Activated T-helper 2 cell treated with anti-CD3 and anti-CD28 coated beads, Interferon-gamma antibody, Interleukin-2, Interleukin-4, amounts not matched to agents 10 μg/mL and 5 μg/mL and 100 μg/mL, durations not matched to agents 14 hours and 24 hours and 36 hours (primary cell): ENCODE measurements at regions of chr15 and their contacts with region 1.

Region 1: GRCh38 chr15:83066734-83067637 is at the start of gene BTBD1:
- DNase-seq: peak; percentile 80
- H3K4me3 Mint-ChIP-seq: peak within 1 kb of the TSS; percentile 81
- H3K27ac Mint-ChIP-seq: peak within 1 kb of the TSS; percentile 72
- H3K4me1 Mint-ChIP-seq: peaks cover 20% of the 10 kb centered on the region
- H3K27me3 Mint-ChIP-seq: no peaks in the 10 kb centered on the region
- total RNA-seq, gene BTBD1: 56.8 and 59.5 TPM in 2 replicates

Region 2: GRCh38 chr15:82832601-82833361 is 234.2 kb before region 1 on chr15:
- intact Hi-C with region 1: loop called (anchors 10 kb)
- DNase-seq: peak; percentile 30
- H3K4me3 Mint-ChIP-seq: peak overlapping the region; percentile 49
- H3K27ac Mint-ChIP-seq: peak overlapping the region; percentile 91
- H3K4me1 Mint-ChIP-seq: peaks cover 46% of the 10 kb centered on the region
- H3K27me3 Mint-ChIP-seq: no peaks in the 10 kb centered on the region

Region 3: GRCh38 chr15:83092309-83092976 is 25.5 kb after region 1 on chr15:
- intact Hi-C with region 1: no loop called
- DNase-seq: no peak
- H3K4me3 Mint-ChIP-seq: no peak overlapping the region
- H3K27ac Mint-ChIP-seq: peak overlapping the region; percentile 24
- H3K4me1 Mint-ChIP-seq: peaks cover 6% of the 10 kb centered on the region
- H3K27me3 Mint-ChIP-seq: peaks cover 22% of the 10 kb centered on the region

Region 4: DNA sequence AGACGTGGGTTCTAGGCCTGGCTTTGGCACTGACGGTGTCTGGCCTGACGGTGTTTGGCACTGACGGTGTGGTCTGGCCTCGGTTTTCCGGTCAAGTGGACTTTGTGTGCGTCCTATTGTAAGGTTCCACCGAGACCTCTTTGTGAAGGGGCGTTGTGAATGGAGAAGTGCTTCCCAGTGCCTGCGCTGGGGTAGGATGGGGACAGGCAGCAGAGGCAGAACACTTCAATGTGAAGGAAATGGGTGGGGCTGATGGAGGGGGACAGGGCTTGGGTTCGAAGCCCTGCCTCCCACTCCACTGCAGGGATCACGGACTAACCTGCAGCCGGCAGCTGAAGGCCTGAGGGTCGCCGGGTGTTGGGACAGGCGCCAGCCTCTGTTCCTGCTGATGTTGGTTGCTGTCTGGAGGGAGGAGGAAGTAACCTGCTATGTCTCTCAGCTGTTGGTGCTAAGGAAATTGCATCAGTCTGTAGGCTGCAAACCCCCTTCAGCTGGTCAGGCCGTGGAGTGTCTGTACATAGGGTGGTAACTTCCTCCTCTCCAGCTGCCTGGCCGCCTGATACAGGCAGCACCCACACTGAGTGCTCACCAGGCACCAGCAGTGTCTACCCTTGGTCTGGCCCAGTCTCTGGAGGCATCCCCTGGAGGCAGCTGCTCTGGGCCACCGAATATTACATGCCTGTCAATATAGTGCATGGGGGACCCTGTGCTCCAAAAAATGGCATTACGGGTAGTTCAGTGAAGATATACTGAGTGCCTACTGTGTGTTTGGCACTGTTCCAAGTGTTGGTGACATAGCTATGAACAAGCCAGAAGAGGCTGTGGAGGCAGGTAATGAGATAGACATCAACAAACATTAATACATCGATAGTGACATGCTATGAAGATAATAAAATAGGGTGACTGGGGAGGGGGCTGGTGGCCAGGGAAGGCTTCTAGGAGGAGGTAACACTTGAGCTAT is 41.6 kb after region 1 on chr15:
- intact Hi-C with region 1: loop called (anchors 5 kb)
- DNase-seq: peak; percentile 27
- H3K4me3 Mint-ChIP-seq: peak overlapping the region; percentile 82
- H3K27ac Mint-ChIP-seq: peak overlapping the region; percentile 25
- H3K4me1 Mint-ChIP-seq: peaks cover 24% of the 10 kb centered on the region
- H3K27me3 Mint-ChIP-seq: peaks cover 15% of the 10 kb centered on the region

Region 5: GRCh38 chr15:83207622-83208411 is 140.8 kb after region 1 on chr15 and contains the start of gene HDGFL3:
- intact Hi-C with region 1: loop called (anchors 5 kb)
- DNase-seq: peak; percentile 13
- H3K4me3 Mint-ChIP-seq: peak within 1 kb of the TSS; percentile 87
- H3K27ac Mint-ChIP-seq: peak within 1 kb of the TSS; percentile 20
- H3K4me1 Mint-ChIP-seq: peaks cover 6% of the 10 kb centered on the region
- H3K27me3 Mint-ChIP-seq: peaks cover 36% of the 10 kb centered on the region
- total RNA-seq, gene HDGFL3: 19.1 TPM in 2 replicates